ENCODE measurements at regions of chr13 and their contacts with region 1.

Region 1: GRCh38 chr13:52128714-52129700 is at the start of gene NEK5:
- DNase-seq: peak; percentile 6 to 69 (median 48)
- ATAC-seq: peak; percentile 83
- H3K4me3 ChIP-seq: peak within 1 kb of the TSS; percentile 62 to 66
- H3K4me3 Mint-ChIP-seq: peak within 1 kb of the TSS; percentile 83
- H3K27ac ChIP-seq: no peak within 1 kb of the TSS
- H3K27ac Mint-ChIP-seq: no peak within 1 kb of the TSS
- H3K4me1 ChIP-seq: peaks cover 16% of the 10 kb centered on the region
- H3K4me1 Mint-ChIP-seq: peaks cover 16% of the 10 kb centered on the region
- H3K27me3 ChIP-seq: peaks cover 5 to 11% of the 10 kb centered on the region in 2 experiments
- H3K27me3 Mint-ChIP-seq: peaks cover 16% of the 10 kb centered on the region
- CTCF ChIP-seq: peak; percentile 46
- total RNA-seq, gene NEK5: not detected

Region 2: DNA sequence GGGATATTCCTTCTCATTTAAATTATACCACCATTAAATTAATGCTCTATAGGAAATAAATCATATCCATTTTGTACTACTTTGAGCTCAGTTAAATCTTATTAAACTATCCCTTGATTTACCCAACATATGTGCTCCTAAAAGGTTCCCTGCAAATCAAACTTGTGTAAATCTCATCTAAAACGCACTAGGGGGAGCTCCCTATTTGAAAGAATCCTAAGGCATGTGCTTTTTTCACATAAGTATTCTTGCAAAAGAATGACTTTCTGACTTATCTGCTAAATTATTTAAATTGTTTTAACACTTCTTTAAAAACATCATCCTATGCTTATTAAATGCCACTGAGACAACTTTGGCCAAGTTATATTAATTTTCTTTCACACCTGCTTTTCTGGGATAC is 684.1 kb before region 1 on chr13:
- CTCF ChIA-PET with region 1: no interaction called
- POLR2A ChIA-PET with region 1: no interaction called
- intact Hi-C with region 1: loop called in 1 of 2 experiments (anchors 5 kb)
- DNase-seq: peak in 2 of 9 experiments; percentile 44 to 58
- ATAC-seq: no peak
- H3K4me3 ChIP-seq: no peak overlapping the region
- H3K4me3 Mint-ChIP-seq: no peak overlapping the region
- H3K27ac ChIP-seq: no peak overlapping the region
- H3K27ac Mint-ChIP-seq: no peak overlapping the region
- H3K4me1 ChIP-seq: peaks cover 7% of the 10 kb centered on the region
- H3K4me1 Mint-ChIP-seq: peaks cover 27% of the 10 kb centered on the region
- H3K27me3 ChIP-seq: no peaks in the 10 kb centered on the region
- H3K27me3 Mint-ChIP-seq: no peaks in the 10 kb centered on the region
- CTCF ChIP-seq: no peak

Region 3: DNA sequence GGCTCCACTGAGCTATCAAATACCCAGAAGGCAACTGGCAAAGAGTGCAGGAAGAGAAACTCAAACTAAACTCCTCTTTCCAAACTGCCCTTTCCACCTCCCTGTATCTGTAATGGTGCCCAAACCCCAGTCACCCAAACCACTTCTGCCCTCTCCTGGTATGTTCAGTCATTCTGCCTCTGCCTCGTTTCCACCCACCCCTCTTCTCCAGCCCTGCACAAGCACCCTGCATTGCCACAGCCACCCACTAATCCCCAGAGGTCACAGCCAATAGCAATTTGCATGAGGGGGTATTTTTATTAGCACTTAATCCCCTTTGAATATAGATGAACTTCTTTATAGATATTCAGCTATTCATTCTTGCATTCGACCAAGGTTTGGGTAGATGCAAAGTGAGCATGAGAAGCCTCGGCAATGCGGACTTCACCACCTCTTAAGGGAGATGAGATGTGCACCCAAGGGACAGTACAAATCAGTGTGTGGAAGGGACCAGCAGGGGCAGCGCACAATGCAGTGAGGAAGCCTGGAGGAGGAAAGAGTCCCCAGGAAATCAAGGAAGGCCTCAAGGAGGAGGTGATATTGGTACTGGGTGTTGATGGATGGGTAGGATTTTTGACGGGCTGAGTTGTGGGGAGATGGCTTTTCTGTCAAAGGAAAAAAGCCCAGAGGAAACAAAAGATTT is 296.4 kb before region 1 on chr13:
- CTCF ChIA-PET with region 1: interaction called, 3 read pairs
- POLR2A ChIA-PET with region 1: no interaction called
- intact Hi-C with region 1: loop called in 1 of 2 experiments (anchors 5 kb)
- DNase-seq: peak; percentile 35 to 83 (median 64)
- ATAC-seq: peak; percentile 98
- H3K4me3 ChIP-seq: no peak overlapping the region
- H3K4me3 Mint-ChIP-seq: peak overlapping the region; percentile 36
- H3K27ac ChIP-seq: no peak overlapping the region
- H3K27ac Mint-ChIP-seq: peak overlapping the region; percentile 28
- H3K4me1 ChIP-seq: peaks cover 48% of the 10 kb centered on the region
- H3K4me1 Mint-ChIP-seq: peaks cover 60% of the 10 kb centered on the region
- H3K27me3 ChIP-seq: no peaks in the 10 kb centered on the region
- H3K27me3 Mint-ChIP-seq: no peaks in the 10 kb centered on the region
- CTCF ChIP-seq: peak; percentile 62

Region 4: GRCh38 chr13:51895906-51896888 is 232.8 kb before region 1 on chr13:
- CTCF ChIA-PET with region 1: interaction called, 6 read pairs
- POLR2A ChIA-PET with region 1: no interaction called
- intact Hi-C with region 1: loop called (anchors 1 to 5 kb)
- DNase-seq: peak in 6 of 9 experiments; percentile 15 to 53 (median 38)
- ATAC-seq: no peak
- H3K4me3 ChIP-seq: no peak overlapping the region
- H3K4me3 Mint-ChIP-seq: no peak overlapping the region
- H3K27ac ChIP-seq: no peak overlapping the region
- H3K27ac Mint-ChIP-seq: no peak overlapping the region
- H3K4me1 ChIP-seq: no peaks in the 10 kb centered on the region
- H3K4me1 Mint-ChIP-seq: no peaks in the 10 kb centered on the region
- H3K27me3 ChIP-seq: no peaks in the 10 kb centered on the region
- H3K27me3 Mint-ChIP-seq: peaks cover 2% of the 10 kb centered on the region
- CTCF ChIP-seq: peak; percentile 23

Region 5: GRCh38 chr13:52118595-52118994 is 10.4 kb before region 1 on chr13:
- CTCF ChIA-PET with region 1: interaction called, 13 read pairs
- POLR2A ChIA-PET with region 1: no interaction called
- intact Hi-C with region 1: no loop called
- DNase-seq: no peak
- ATAC-seq: no peak
- H3K4me3 ChIP-seq: no peak overlapping the region
- H3K4me3 Mint-ChIP-seq: no peak overlapping the region
- H3K27ac ChIP-seq: no peak overlapping the region
- H3K27ac Mint-ChIP-seq: no peak overlapping the region
- H3K4me1 ChIP-seq: no peaks in the 10 kb centered on the region
- H3K4me1 Mint-ChIP-seq: no peaks in the 10 kb centered on the region
- H3K27me3 ChIP-seq: no peaks in the 10 kb centered on the region
- H3K27me3 Mint-ChIP-seq: peaks cover 10% of the 10 kb centered on the region
- CTCF ChIP-seq: no peak

Region 6: GRCh38 chr13:52194184-52194868 is 65.3 kb after region 1 on chr13:
- CTCF ChIA-PET with region 1: no interaction called
- POLR2A ChIA-PET with region 1: no interaction called
- intact Hi-C with region 1: loop called in 1 of 2 experiments (anchors 1 kb)
- DNase-seq: peak; percentile 81 to 95 (median 86)
- ATAC-seq: peak; percentile 85
- H3K4me3 ChIP-seq: peak overlapping the region; percentile 76 to 87
- H3K4me3 Mint-ChIP-seq: peak overlapping the region; percentile 98
- H3K27ac ChIP-seq: peak overlapping the region; percentile 64 to 65
- H3K27ac Mint-ChIP-seq: peak overlapping the region; percentile 98
- H3K4me1 ChIP-seq: peaks cover 16% of the 10 kb centered on the region
- H3K4me1 Mint-ChIP-seq: peaks cover 39% of the 10 kb centered on the region
- H3K27me3 ChIP-seq: no peaks in the 10 kb centered on the region
- H3K27me3 Mint-ChIP-seq: no peaks in the 10 kb centered on the region
- CTCF ChIP-seq: no peak

Region 7: GRCh38 chr13:53112525-53112924 is 983.5 kb after region 1 on chr13:
- CTCF ChIA-PET with region 1: no interaction called
- POLR2A ChIA-PET with region 1: no interaction called
- intact Hi-C with region 1: no loop called
- DNase-seq: no peak
- ATAC-seq: no peak
- H3K4me3 ChIP-seq: no peak overlapping the region
- H3K4me3 Mint-ChIP-seq: no peak overlapping the region
- H3K27ac ChIP-seq: no peak overlapping the region
- H3K27ac Mint-ChIP-seq: no peak overlapping the region
- H3K4me1 ChIP-seq: no peaks in the 10 kb centered on the region
- H3K4me1 Mint-ChIP-seq: no peaks in the 10 kb centered on the region
- H3K27me3 ChIP-seq: no peaks in the 10 kb centered on the region
- H3K27me3 Mint-ChIP-seq: no peaks in the 10 kb centered on the region
- CTCF ChIP-seq: no peak

Region 8: GRCh38 chr13:53151336-53152056 is 1022.5 kb after region 1 on chr13:
- CTCF ChIA-PET with region 1: no interaction called
- POLR2A ChIA-PET with region 1: no interaction called
- intact Hi-C with region 1: no loop called
- DNase-seq: peak in 4 of 9 experiments; percentile 16 to 45 (median 24)
- ATAC-seq: peak; percentile 26
- H3K4me3 ChIP-seq: no peak overlapping the region
- H3K4me3 Mint-ChIP-seq: no peak overlapping the region
- H3K27ac ChIP-seq: no peak overlapping the region
- H3K27ac Mint-ChIP-seq: no peak overlapping the region
- H3K4me1 ChIP-seq: no peaks in the 10 kb centered on the region
- H3K4me1 Mint-ChIP-seq: no peaks in the 10 kb centered on the region
- H3K27me3 ChIP-seq: no peaks in the 10 kb centered on the region
- H3K27me3 Mint-ChIP-seq: peaks cover 8% of the 10 kb centered on the region
- CTCF ChIP-seq: no peak

Measured in CD8-positive, alpha-beta T cell (primary cell).